ENCODE measurements at regions of chr5 and their contacts with region 1.

Region 1: GRCh38 chr5:156640691-156641241 is 209.3 kb upstream of the PPP1R2B start:
- DNase-seq: no peak
- H3K4me3 ChIP-seq: no peak overlapping the region
- H3K27ac ChIP-seq: peak overlapping the region in 2 of 4 donors; percentile 21 to 41
- H3K4me1 ChIP-seq: peaks cover 0 to 9% (median 0%) of the 10 kb centered on the region in 4 donors
- H3K27me3 ChIP-seq: no peaks in the 10 kb centered on the region
- CTCF ChIP-seq: no peak
- EP300 ChIP-seq: no peak
- POLR2A ChIP-seq: no peak

Region 2: GRCh38 chr5:155402927-155403670 is 1237.7 kb before region 1 on chr5:
- in situ Hi-C with region 1: no loop called
- intact Hi-C with region 1: no loop called
- DNase-seq: no peak
- H3K4me3 ChIP-seq: no peak overlapping the region
- H3K27ac ChIP-seq: no peak overlapping the region
- H3K4me1 ChIP-seq: no peaks in the 10 kb centered on the region
- H3K27me3 ChIP-seq: no peaks in the 10 kb centered on the region
- CTCF ChIP-seq: no peak
- EP300 ChIP-seq: no peak
- POLR2A ChIP-seq: no peak

Region 3: GRCh38 chr5:156698323-156698722 is 57.6 kb after region 1 on chr5:
- in situ Hi-C with region 1: no loop called
- intact Hi-C with region 1: loop called (anchors 2 kb)
- DNase-seq: no peak
- H3K4me3 ChIP-seq: no peak overlapping the region
- H3K27ac ChIP-seq: no peak overlapping the region
- H3K4me1 ChIP-seq: no peaks in the 10 kb centered on the region
- H3K27me3 ChIP-seq: no peaks in the 10 kb centered on the region
- CTCF ChIP-seq: no peak
- EP300 ChIP-seq: no peak
- POLR2A ChIP-seq: no peak